Naive thymus-derived CD4-positive, alpha-beta T cell (primary cell): ENCODE measurements at regions of chr15 and their contacts with region 1.

Region 1: GRCh38 chr15:72521682-72522081 is 47.6 kb downstream of the ARIH1 start:
- DNase-seq: no peak
- ATAC-seq: no peak
- H3K4me3 ChIP-seq: no peak overlapping the region
- H3K4me3 Mint-ChIP-seq: no peak overlapping the region
- H3K27ac ChIP-seq: no peak overlapping the region
- H3K27ac Mint-ChIP-seq: peak overlapping the region in 1 of 9 donors; percentile 67
- H3K4me1 ChIP-seq: peaks cover 0 to under 1% of the 10 kb centered on the region in 2 donors
- H3K4me1 Mint-ChIP-seq: peaks cover 4 to 42% (median 26%) of the 10 kb centered on the region in 7 donors
- H3K27me3 ChIP-seq: no peaks in the 10 kb centered on the region
- H3K27me3 Mint-ChIP-seq: no peaks in the 10 kb centered on the region

Region 2: GRCh38 chr15:72237286-72238224 is 284.1 kb before region 1 on chr15:
- CTCF ChIA-PET with region 1: no interaction called
- POLR2A ChIA-PET with region 1: no interaction called
- intact Hi-C with region 1: no loop called
- DNase-seq: peak in 2 of 9 donors; percentile 11 to 78
- ATAC-seq: peak; percentile 90
- H3K4me3 ChIP-seq: no peak overlapping the region
- H3K4me3 Mint-ChIP-seq: peak overlapping the region in 1 of 10 donors; percentile 78
- H3K27ac ChIP-seq: no peak overlapping the region
- H3K27ac Mint-ChIP-seq: peak overlapping the region in 5 of 9 donors; percentile 1 to 90 (median 62)
- H3K4me1 ChIP-seq: peaks cover 5 to 12% of the 10 kb centered on the region in 2 donors
- H3K4me1 Mint-ChIP-seq: peaks cover 12 to 34% (median 25%) of the 10 kb centered on the region in 7 donors
- H3K27me3 ChIP-seq: no peaks in the 10 kb centered on the region
- H3K27me3 Mint-ChIP-seq: peaks cover 0 to 2% (median 0%) of the 10 kb centered on the region in 5 donors

Region 3: GRCh38 chr15:72532991-72533601 is 11.4 kb after region 1 on chr15:
- CTCF ChIA-PET with region 1: no interaction called
- POLR2A ChIA-PET with region 1: interaction called, 4 read pairs
- intact Hi-C with region 1: loop called in 1 of 2 experiments (anchors 2 kb)
- DNase-seq: peak in 7 of 9 donors; percentile 6 to 41 (median 30)
- ATAC-seq: peak; percentile 47
- H3K4me3 ChIP-seq: no peak overlapping the region
- H3K4me3 Mint-ChIP-seq: peak overlapping the region in 1 of 10 donors; percentile 58
- H3K27ac ChIP-seq: no peak overlapping the region
- H3K27ac Mint-ChIP-seq: peak overlapping the region in 1 of 9 donors; percentile 41
- H3K4me1 ChIP-seq: peaks cover 0 to 31% of the 10 kb centered on the region in 2 donors
- H3K4me1 Mint-ChIP-seq: peaks cover 27 to 87% (median 70%) of the 10 kb centered on the region in 7 donors
- H3K27me3 ChIP-seq: no peaks in the 10 kb centered on the region
- H3K27me3 Mint-ChIP-seq: no peaks in the 10 kb centered on the region